ENCODE measurements at regions of chr20 and their contacts with region 1.

Region 1: GRCh38 chr20:4787820-4788219 is 66.1 kb downstream of the PRND start:
- DNase-seq: no peak
- H3K4me3 Mint-ChIP-seq: no peak overlapping the region
- H3K27ac Mint-ChIP-seq: peak overlapping the region; percentile 68
- H3K4me1 Mint-ChIP-seq: peaks cover 14% of the 10 kb centered on the region
- H3K27me3 Mint-ChIP-seq: no peaks in the 10 kb centered on the region

Region 2: DNA sequence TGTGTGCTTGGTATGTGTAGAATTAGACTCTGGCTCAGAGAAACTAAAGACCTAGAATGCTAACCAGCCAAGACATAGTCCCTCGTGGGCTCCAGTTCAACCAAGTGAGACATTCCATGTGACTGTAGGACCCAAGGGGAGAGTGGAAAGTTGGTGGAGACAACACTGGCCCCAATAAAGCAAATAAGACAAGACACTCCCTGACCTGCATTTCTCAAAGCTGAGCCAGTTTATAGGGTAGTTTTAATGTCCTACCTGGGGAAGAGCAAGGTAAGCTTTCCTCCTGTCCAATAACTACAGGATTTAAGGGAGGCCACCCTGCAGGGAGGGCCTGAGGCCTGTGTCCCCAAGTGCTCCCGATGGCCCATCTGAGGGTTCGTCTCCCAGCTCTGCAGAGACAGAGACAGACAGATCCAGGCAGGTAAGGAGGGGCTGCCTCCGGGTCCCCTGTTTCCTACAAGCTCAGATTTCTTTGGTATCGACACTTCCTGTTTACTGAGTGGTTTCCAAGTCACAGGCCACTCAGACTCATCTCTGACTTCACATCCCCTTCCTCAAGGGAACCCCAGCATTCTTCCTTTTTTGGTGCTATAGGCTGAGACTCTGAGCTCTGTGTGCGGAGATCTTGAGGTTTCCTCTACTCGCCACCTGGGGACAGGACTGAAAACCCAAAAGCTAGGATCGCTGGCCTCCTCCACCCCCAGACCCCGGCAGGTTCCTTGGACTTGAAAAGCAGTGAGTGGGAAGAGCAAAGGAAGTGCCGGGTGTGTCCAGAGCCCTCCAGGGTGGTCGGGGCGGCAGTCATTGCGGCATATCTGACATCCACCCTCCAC is 26.3 kb after region 1 on chr20:
- intact Hi-C with region 1: loop called (anchors 2 kb)
- DNase-seq: peak; percentile 93
- H3K4me3 Mint-ChIP-seq: peak overlapping the region; percentile 87
- H3K27ac Mint-ChIP-seq: peak overlapping the region; percentile 96
- H3K4me1 Mint-ChIP-seq: peaks cover 69% of the 10 kb centered on the region
- H3K27me3 Mint-ChIP-seq: no peaks in the 10 kb centered on the region

Measured in activated CD4-positive, alpha-beta T cell treated with anti-CD3 and anti-CD28 coated beads, Interleukin-2, amount 10 ng/mL, durations not matched to agents 24 days and 14 days (primary cell).